ENCODE measurements at regions of chr11 and their contacts with region 1.

Region 1: GRCh38 chr11:78000193-78000592 is 5.7 kb upstream of the INTS4 start:
- DNase-seq: peak; percentile 81
- H3K4me3 Mint-ChIP-seq: no peak overlapping the region
- H3K27ac Mint-ChIP-seq: no peak overlapping the region
- H3K4me1 Mint-ChIP-seq: peaks cover 8% of the 10 kb centered on the region
- H3K27me3 Mint-ChIP-seq: peaks cover 6% of the 10 kb centered on the region

Region 2: DNA sequence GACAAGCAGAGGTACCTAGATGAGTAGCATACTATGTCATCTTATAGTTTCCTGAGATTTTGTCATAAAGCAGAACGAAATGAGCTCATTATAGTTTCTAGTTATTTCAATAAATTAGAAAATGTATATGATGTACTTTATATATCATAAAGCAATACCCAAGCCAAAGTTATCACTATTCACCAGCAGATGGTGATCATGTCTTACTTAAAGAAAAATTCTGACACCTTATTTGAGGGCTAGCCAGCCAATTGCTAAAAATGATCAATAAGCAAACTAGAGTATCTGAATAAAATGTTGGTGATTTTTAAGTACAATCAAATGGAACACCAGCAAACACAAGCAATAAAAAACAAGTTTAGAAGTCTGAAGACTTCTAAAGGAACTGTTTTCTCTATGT is 223.7 kb before region 1 on chr11:
- intact Hi-C with region 1: loop called (anchors 1 kb)
- DNase-seq: no peak
- H3K4me3 Mint-ChIP-seq: no peak overlapping the region
- H3K27ac Mint-ChIP-seq: no peak overlapping the region
- H3K4me1 Mint-ChIP-seq: peaks cover 10% of the 10 kb centered on the region
- H3K27me3 Mint-ChIP-seq: no peaks in the 10 kb centered on the region

Region 3: GRCh38 chr11:78085972-78086371 is 85.8 kb after region 1 on chr11:
- intact Hi-C with region 1: no loop called
- DNase-seq: no peak
- H3K4me3 Mint-ChIP-seq: no peak overlapping the region
- H3K27ac Mint-ChIP-seq: no peak overlapping the region
- H3K4me1 Mint-ChIP-seq: peaks cover 11% of the 10 kb centered on the region
- H3K27me3 Mint-ChIP-seq: peaks cover 2% of the 10 kb centered on the region

Region 4: DNA sequence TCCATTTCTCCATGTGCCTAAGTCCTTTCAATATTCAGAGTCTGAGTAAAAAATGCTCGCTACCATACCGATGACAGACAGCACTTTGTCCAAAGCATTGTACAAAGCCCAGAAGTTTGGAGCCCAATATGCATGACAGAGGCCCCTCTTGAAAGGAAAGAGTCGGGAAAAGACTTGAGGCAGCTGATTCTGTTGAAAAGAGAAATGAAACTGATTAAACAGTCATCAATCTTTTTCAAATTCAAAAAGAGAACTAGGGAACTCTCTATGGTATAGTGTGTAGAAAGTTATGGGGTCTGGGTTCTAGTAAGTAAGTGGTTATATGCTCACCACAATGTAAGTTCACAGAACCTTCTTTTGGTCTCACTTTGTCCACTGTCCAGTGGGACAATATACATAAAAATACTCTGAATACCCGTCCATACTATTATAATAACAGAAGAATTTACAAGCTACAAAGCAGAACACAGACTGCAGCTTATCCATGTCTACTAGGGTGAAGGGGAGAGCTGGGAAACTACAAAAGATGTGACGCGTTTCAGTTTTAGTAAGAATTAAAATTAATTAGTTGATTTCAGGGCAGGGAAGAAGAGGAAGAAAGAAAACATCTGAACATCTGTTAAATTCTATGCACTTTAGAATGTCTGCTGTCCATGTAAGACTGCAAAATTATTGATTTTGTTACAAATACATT is 112.5 kb after region 1 on chr11:
- intact Hi-C with region 1: no loop called
- DNase-seq: no peak
- H3K4me3 Mint-ChIP-seq: no peak overlapping the region
- H3K27ac Mint-ChIP-seq: no peak overlapping the region
- H3K4me1 Mint-ChIP-seq: no peaks in the 10 kb centered on the region
- H3K27me3 Mint-ChIP-seq: no peaks in the 10 kb centered on the region